PC-9 (cell line): ENCODE measurements at regions of chr13 and their contacts with region 1.

Region 1: DNA sequence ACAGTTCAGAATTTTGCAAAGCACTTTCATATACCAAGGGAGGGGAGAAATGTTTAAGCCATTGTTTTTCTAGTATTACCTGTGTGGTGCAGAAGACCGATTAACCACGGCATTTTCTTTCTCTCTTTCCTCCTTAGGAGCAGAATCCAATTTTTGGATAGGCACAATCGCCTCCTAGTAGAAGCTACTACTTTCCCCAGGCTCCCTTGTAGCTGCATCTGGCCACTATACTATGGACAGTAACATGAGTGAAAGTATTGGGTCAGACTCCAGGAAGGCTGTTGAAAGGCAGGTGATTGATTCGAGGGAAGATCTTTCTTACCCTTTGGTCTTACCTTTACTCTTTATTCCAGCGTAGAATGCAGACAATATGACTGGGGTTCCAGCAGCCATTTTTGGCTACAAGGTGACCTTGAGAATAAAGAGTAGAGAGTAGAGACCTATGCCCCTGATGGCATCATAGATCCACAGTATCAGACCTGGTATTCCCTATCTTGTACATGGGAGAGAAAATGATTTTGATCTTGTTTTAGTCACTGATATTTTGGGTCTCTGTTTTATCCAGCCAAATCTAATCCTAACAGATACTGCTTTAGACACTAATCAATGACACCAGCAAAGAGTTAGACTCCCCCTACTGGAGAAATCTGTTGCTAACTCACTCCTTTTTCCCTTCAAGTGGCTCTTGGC is 77.0 kb downstream of the LRRC63 start:
- DNase-seq: no peak
- H3K4me3 ChIP-seq: no peak overlapping the region
- H3K27ac ChIP-seq: no peak overlapping the region
- H3K4me1 ChIP-seq: no peaks in the 10 kb centered on the region
- H3K27me3 ChIP-seq: no peaks in the 10 kb centered on the region
- CTCF ChIP-seq: peak; percentile 84

Region 2: DNA sequence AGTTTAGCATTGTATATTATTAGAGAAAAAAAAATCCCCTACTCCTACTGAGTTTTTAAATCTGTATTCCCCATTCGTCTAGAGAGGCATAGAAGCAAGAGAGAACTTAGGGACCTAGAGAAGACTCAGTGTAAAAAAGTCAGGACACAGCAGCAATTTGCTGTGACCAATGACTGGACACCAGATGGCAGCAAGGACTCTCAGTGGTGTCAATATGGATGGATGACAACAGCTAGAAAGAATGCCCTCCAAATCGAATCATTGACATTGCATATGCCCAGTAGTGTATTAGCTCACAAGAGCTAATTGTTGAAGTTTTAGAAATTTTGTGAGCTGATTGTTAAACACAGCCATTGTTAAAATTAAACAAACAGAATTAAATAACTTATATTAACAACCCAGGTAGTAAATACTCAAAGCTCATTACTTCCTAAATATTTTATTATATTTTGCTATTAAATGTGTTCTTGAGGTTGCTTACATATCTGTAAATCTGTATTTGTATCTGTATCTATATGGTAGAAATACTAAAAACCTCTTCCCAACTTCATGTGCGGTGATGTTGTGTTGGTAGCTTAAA is 481.1 kb before region 1 on chr13:
- CTCF ChIA-PET with region 1: no interaction called
- POLR2A ChIA-PET with region 1: no interaction called
- intact Hi-C with region 1: loop called (anchors 2 kb)
- DNase-seq: peak; percentile 24 to 56
- H3K4me3 ChIP-seq: no peak overlapping the region
- H3K27ac ChIP-seq: no peak overlapping the region
- H3K4me1 ChIP-seq: no peaks in the 10 kb centered on the region
- H3K27me3 ChIP-seq: peaks cover 7% of the 10 kb centered on the region; the same call in 1 of the 2 replicates
- CTCF ChIP-seq: peak; percentile 74

Region 3: GRCh38 chr13:46160471-46161066 is 128.1 kb before region 1 on chr13:
- CTCF ChIA-PET with region 1: no interaction called
- POLR2A ChIA-PET with region 1: no interaction called
- intact Hi-C with region 1: loop called (anchors 2 kb)
- DNase-seq: no peak
- H3K4me3 ChIP-seq: no peak overlapping the region
- H3K27ac ChIP-seq: no peak overlapping the region
- H3K4me1 ChIP-seq: no peaks in the 10 kb centered on the region
- H3K27me3 ChIP-seq: no peaks in the 10 kb centered on the region
- CTCF ChIP-seq: peak; percentile 87